ENCODE measurements at regions of chr20 and their contacts with region 1.

Region 1: GRCh38 chr20:49631061-49631788 is 63.3 kb upstream of the PTGIS start:
- DNase-seq: peak; percentile 26
- H3K4me3 ChIP-seq: peak overlapping the region; percentile 59
- H3K27ac ChIP-seq: peak overlapping the region; percentile 91
- H3K4me1 ChIP-seq: peaks cover 97% of the 10 kb centered on the region
- CTCF ChIP-seq: no peak

Region 2: DNA sequence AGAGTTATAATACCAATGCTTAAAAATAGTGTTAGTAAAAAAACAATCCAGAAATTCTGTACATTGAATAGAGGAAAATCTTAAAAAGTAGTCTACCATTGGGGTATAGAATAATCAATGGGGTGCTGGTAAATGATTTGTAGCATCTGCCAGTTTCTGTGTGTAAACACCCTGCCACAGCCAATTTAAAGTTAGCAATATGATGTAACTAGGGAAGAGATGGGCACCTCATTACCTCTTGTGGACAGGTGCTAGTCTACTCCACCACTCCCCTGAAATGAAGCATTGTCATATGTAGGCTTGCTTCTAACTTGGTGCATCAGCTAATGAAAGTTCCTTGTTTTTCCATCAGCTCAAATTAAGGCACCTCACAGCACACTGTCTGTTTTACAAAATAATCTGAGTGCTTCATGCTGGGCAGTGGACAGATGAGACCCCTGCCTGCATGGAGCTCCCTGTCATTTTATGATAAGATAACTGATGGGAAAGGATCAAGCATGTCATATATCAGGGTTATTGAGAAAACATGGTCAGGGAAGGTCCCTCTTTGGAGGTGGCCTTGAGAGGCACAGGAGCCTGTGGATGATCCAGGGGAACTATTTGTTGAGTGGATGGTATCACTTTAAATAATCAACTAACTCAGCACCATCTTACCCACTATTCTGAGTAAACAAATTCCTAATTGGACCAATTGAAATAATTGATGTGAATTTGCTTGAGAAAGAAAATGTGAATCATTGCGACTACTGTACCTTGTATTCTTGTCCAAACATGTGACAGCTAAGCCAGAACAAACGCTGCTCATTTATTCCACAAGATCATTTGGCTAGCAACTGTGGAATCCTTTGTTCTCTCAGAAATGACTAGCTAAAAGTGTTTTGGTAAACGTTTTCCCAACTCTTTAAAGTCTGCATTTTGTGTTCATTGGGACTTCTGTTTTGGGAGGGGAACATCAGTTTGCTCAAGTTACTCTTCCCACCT is 631.0 kb before region 1 on chr20:
- CTCF ChIA-PET with region 1: no interaction called
- POLR2A ChIA-PET with region 1: no interaction called
- intact Hi-C with region 1: no loop called
- DNase-seq: no peak
- H3K4me3 ChIP-seq: no peak overlapping the region
- H3K27ac ChIP-seq: no peak overlapping the region
- H3K4me1 ChIP-seq: no peaks in the 10 kb centered on the region
- CTCF ChIP-seq: no peak

Region 3: GRCh38 chr20:49508435-49509199 is 122.6 kb before region 1 on chr20:
- CTCF ChIA-PET with region 1: no interaction called
- POLR2A ChIA-PET with region 1: no interaction called
- intact Hi-C with region 1: no loop called
- DNase-seq: peak; percentile 73
- H3K4me3 ChIP-seq: no peak overlapping the region
- H3K27ac ChIP-seq: no peak overlapping the region
- H3K4me1 ChIP-seq: no peaks in the 10 kb centered on the region
- CTCF ChIP-seq: peak; percentile 77

Region 4: GRCh38 chr20:49668181-49668877 is 37.1 kb after region 1 on chr20:
- CTCF ChIA-PET with region 1: no interaction called
- POLR2A ChIA-PET with region 1: interaction called, 19 read pairs
- intact Hi-C with region 1: loop called (anchors 2 kb)
- DNase-seq: peak; percentile 74
- H3K4me3 ChIP-seq: peak overlapping the region; percentile 64
- H3K27ac ChIP-seq: peak overlapping the region; percentile 61
- H3K4me1 ChIP-seq: peaks cover 57% of the 10 kb centered on the region
- CTCF ChIP-seq: no peak

Region 5: GRCh38 chr20:49713753-49714712 is 82.8 kb after region 1 on chr20 and contains the start of gene B4GALT5:
- CTCF ChIA-PET with region 1: no interaction called
- POLR2A ChIA-PET with region 1: no interaction called
- intact Hi-C with region 1: loop called (anchors 5 kb)
- DNase-seq: peak; percentile 93
- H3K4me3 ChIP-seq: peak within 1 kb of the TSS; percentile 99
- H3K27ac ChIP-seq: peak within 1 kb of the TSS; percentile 63
- H3K4me1 ChIP-seq: peaks cover 36% of the 10 kb centered on the region
- CTCF ChIP-seq: no peak
- total RNA-seq, gene B4GALT5: 9.7 and 9.8 TPM in 2 replicates

Region 6: GRCh38 chr20:49797344-49797615 is 166.1 kb after region 1 on chr20:
- CTCF ChIA-PET with region 1: no interaction called
- POLR2A ChIA-PET with region 1: interaction called, 4 read pairs
- intact Hi-C with region 1: loop called (anchors 5 kb)
- DNase-seq: no peak
- H3K4me3 ChIP-seq: no peak overlapping the region
- H3K27ac ChIP-seq: no peak overlapping the region
- H3K4me1 ChIP-seq: peaks cover 31% of the 10 kb centered on the region
- CTCF ChIP-seq: no peak

Region 7: GRCh38 chr20:49853640-49854039 is 222.4 kb after region 1 on chr20:
- CTCF ChIA-PET with region 1: no interaction called
- POLR2A ChIA-PET with region 1: no interaction called
- intact Hi-C with region 1: no loop called
- DNase-seq: no peak
- H3K4me3 ChIP-seq: no peak overlapping the region
- H3K27ac ChIP-seq: no peak overlapping the region
- H3K4me1 ChIP-seq: no peaks in the 10 kb centered on the region
- CTCF ChIP-seq: no peak

Region 8: GRCh38 chr20:49969946-49970345 is 338.7 kb after region 1 on chr20:
- CTCF ChIA-PET with region 1: no interaction called
- POLR2A ChIA-PET with region 1: no interaction called
- intact Hi-C with region 1: no loop called
- DNase-seq: no peak
- H3K4me3 ChIP-seq: no peak overlapping the region
- H3K27ac ChIP-seq: no peak overlapping the region
- H3K4me1 ChIP-seq: no peaks in the 10 kb centered on the region
- CTCF ChIP-seq: no peak

Measured in OCI-LY7 (cell line).